Ovary (tissue), 10 donors: ENCODE measurements at regions of chr17 and their contacts with region 1.

Region 1: GRCh38 chr17:74961657-74962490 is 10.7 kb downstream of the HID1 start:
- DNase-seq: peak; percentile 83 to 93 (median 90)
- H3K4me3 ChIP-seq: no peak overlapping the region
- H3K27ac ChIP-seq: no peak overlapping the region
- H3K4me1 ChIP-seq: no peaks in the 10 kb centered on the region
- H3K27me3 ChIP-seq: no peaks in the 10 kb centered on the region
- CTCF ChIP-seq: peak; percentile 70 to 83 (median 83)
- EP300 ChIP-seq: no peak
- POLR2A ChIP-seq: no peak

Region 2: GRCh38 chr17:74790161-74791054 is 171.5 kb before region 1 on chr17:
- intact Hi-C with region 1: loop called in 3 of 4 experiments (anchors 2 to 10 kb)
- DNase-seq: no peak
- H3K4me3 ChIP-seq: no peak overlapping the region
- H3K27ac ChIP-seq: no peak overlapping the region
- H3K4me1 ChIP-seq: no peaks in the 10 kb centered on the region
- H3K27me3 ChIP-seq: no peaks in the 10 kb centered on the region
- CTCF ChIP-seq: no peak
- EP300 ChIP-seq: no peak
- POLR2A ChIP-seq: no peak

Region 3: GRCh38 chr17:74864866-74865395 is 96.9 kb before region 1 on chr17:
- intact Hi-C with region 1: loop called in 1 of 4 experiments (anchors 10 kb)
- DNase-seq: peak; percentile 66 to 86 (median 83)
- H3K4me3 ChIP-seq: no peak overlapping the region
- H3K27ac ChIP-seq: no peak overlapping the region
- H3K4me1 ChIP-seq: peaks cover 8% of the 10 kb centered on the region
- H3K27me3 ChIP-seq: peaks cover 3% of the 10 kb centered on the region
- CTCF ChIP-seq: peak; percentile 90 to 94 (median 93)
- EP300 ChIP-seq: no peak
- POLR2A ChIP-seq: no peak

Region 4: GRCh38 chr17:75124041-75124818 is 162.4 kb after region 1 on chr17:
- intact Hi-C with region 1: loop called in 1 of 4 experiments (anchors 10 kb)
- DNase-seq: peak in 2 of 5 donors; percentile 40 to 55
- H3K4me3 ChIP-seq: no peak overlapping the region
- H3K27ac ChIP-seq: no peak overlapping the region
- H3K4me1 ChIP-seq: no peaks in the 10 kb centered on the region
- H3K27me3 ChIP-seq: no peaks in the 10 kb centered on the region
- CTCF ChIP-seq: no peak
- EP300 ChIP-seq: no peak
- POLR2A ChIP-seq: no peak

Region 5: DNA sequence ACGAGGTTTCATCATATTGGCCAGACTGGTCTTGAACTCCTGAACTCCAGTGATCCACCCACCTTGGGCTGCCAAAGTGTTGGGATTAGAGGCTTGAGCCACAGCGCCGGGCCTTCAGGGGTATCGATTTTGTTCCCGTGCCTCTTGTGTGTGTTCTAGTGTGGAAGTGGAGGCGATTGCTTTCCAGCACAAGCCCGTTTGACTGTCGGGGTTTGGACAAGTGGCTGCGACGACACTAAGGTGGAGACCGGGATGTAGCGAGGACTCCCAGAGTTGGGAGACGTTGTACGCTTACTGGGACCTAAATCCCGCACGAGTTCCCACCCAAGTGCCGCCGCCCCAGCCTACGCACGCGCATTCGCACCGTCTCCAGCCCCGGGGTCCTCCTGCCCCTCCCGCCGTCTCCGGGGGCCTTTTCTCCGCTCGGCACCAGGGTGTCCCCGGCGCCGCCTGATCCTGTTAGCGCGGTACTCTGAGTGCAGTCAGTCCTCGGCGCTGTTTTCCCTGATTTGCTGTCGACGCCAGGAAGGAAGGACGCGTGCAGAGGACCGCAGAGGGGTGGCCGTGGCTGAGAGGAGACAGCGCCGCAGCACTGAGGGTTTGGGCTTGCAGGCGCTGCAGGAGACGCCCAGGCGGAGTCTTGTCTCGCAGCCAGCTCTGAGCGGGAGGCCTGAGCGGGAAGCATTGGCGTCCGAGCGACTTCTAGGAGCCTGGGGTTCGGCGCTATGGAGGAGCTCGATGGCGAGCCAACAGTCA is 243.3 kb after region 1 on chr17 and contains the start of gene NUP85:
- intact Hi-C with region 1: loop called (anchors 5 to 10 kb)
- DNase-seq: peak; percentile 94 to 96 (median 95)
- H3K4me3 ChIP-seq: peak within 1 kb of the TSS; percentile 87
- H3K27ac ChIP-seq: peak within 1 kb of the TSS; percentile 76 to 95
- H3K4me1 ChIP-seq: peaks cover 4% of the 10 kb centered on the region
- H3K27me3 ChIP-seq: no peaks in the 10 kb centered on the region
- CTCF ChIP-seq: peak in 1 of 3 donors; percentile 28
- EP300 ChIP-seq: no peak
- POLR2A ChIP-seq: peak; percentile 83
- total RNA-seq, gene NUP85: 23.4 to 82.2 (median 55.1) TPM